ENCODE measurements at regions of chr3 and their contacts with region 1.

Region 1: DNA sequence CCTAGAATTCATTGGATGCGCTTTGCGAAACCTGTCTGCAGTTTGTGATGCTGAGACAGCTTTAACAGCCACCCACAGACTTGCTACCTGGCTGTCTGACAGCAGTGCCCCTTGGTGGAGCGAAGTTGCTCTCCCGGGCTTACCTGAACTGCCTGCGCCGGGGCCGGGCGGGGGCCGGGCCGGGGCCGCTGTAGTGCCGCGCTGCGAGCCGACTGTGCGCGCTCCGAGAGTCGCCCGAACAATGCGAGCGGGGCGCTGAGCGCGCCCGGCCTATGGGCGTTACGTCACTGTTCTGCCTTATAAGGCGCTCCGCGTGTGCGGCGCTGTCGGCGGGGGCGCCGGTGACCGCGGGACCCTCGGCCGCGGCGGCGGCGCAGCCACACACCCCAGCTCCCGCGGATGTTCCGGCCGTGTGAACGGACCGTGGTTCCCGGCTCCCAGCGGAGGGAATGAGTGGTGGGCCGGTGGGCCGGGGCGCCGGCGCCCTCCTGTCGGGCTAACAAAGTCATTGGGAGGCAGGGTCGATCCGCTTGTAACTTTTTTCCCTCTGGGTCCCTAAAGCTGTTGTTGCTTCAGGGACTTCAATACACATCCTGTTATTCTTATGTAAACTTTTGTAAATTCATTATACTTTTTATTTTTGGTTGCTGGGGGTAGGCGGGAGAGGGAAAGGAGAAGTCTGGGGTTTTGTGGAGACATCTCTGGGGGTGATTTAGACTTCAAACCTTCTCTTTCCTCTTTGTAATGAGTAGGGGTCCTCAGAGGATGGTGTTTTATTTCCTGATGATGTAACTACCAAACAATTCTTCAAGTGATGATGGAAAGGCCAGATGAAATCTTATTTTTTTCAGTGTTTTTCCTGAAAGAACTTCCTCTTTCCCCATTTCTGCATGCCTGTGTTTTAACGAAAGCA is 58.5 kb downstream of the CMSS1 start:
- DNase-seq: peak; percentile 84 to 86
- ATAC-seq: peak; percentile 94 to 97 (median 94)
- H3K4me3 ChIP-seq: peak overlapping the region; percentile 55 to 88 (median 75)
- H3K27ac ChIP-seq: peak overlapping the region; percentile 70 to 98 (median 94)
- H3K4me1 ChIP-seq: peaks cover 2 to 65% (median 44%) of the 10 kb centered on the region in 9 donors
- H3K27me3 ChIP-seq: no peaks in the 10 kb centered on the region
- CTCF ChIP-seq: peak in 3 of 9 donors; percentile 23 to 40 (median 40)

Region 2: DNA sequence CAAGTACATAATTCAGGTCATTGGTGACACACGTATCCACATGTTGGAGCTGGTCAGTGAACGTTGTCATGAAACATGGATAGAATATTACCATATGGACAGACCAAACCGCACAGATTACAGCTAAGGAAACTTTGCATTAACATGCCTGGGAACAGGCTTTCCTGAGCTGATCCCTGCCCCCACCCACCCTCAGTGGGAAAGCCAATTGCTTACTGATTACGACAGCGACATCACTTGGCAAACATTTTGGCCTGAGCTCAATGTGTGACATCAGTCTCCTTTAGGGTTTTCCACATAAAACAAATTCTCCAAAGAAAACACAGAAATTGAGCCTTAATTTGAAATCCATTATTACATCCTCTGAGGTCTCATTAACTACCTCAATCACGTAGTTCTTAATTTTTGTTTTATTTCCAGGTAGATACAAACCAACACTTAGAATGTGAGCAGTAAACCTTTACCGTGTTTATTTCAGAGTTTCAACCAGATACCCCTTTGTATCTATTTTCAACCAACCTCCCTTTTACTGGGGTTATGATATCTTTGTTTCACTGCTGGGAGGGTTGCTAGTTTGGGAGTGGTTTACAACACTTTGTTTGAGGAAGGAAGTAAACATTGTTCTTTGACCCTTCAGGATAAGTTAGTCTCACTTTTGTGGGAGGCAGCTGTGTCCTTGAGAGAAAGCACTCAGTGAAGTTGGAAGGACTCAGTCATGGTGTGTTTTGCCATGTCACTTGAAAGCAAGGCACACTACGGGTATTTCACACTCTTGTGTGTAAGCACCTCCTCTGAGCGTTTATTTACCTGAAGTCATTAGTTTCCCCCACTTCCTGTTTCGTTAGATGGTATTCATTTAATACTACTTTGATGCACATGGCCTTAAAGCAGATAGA is 44.5 kb after region 1 on chr3:
- intact Hi-C with region 1: loop called in 5 of 10 experiments (anchors 2 to 10 kb)
- DNase-seq: peak; percentile 60 to 90
- ATAC-seq: peak; percentile 61 to 89 (median 80)
- H3K4me3 ChIP-seq: no peak overlapping the region
- H3K27ac ChIP-seq: peak overlapping the region; percentile 44 to 90 (median 78)
- H3K4me1 ChIP-seq: peaks cover 3 to 50% (median 36%) of the 10 kb centered on the region in 9 donors
- H3K27me3 ChIP-seq: no peaks in the 10 kb centered on the region
- CTCF ChIP-seq: no peak

Region 3: DNA sequence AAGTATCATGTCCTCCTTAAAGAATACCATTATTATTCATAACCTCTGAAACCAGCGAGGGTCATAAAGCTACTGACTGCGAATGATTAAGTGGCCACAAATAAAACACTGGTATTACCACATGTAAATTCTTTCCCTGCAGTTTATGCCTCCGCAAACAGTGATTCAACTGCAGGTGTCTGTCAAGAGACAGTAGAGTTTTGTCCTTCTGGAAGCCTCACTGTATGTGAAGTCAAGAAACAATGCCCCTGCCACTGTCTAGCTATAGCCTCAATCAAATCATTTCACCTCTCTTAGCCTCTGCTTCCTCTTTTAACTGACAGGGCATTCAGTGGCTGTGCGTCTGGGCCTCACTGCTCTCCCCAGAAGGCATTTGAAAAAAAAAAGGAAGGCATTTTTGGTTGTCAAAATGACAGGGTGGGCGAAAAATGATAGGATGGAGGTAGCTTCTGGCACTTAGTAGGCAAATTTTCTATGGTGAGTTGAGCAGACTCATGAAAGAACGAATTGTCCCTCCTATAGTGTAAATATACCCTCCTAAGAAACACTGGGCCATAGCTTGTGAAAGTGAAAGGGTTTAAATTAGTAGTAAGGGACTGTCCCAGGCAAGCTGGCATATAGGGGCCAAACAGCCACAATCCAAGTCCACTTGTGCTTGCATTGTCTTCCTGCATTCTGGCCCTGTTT is 171.4 kb after region 1 on chr3:
- intact Hi-C with region 1: loop called in 6 of 10 experiments (anchors 5 to 10 kb)
- DNase-seq: peak in 1 of 2 donors; percentile 16
- ATAC-seq: peak in 6 of 8 donors; percentile 15 to 47 (median 37)
- H3K4me3 ChIP-seq: peak overlapping the region in 1 of 10 donors; percentile 2
- H3K27ac ChIP-seq: peak overlapping the region in 8 of 10 donors; percentile 42 to 91 (median 79)
- H3K4me1 ChIP-seq: peaks cover 3 to 62% (median 36%) of the 10 kb centered on the region in 9 donors
- H3K27me3 ChIP-seq: no peaks in the 10 kb centered on the region
- CTCF ChIP-seq: no peak

Region 4: GRCh38 chr3:100159331-100160153 is 283.4 kb after region 1 on chr3:
- intact Hi-C with region 1: loop called in 1 of 10 experiments (anchors 10 kb)
- DNase-seq: no peak
- ATAC-seq: peak in 5 of 8 donors; percentile 31 to 36 (median 35)
- H3K4me3 ChIP-seq: no peak overlapping the region
- H3K27ac ChIP-seq: peak overlapping the region; percentile 3 to 83 (median 65)
- H3K4me1 ChIP-seq: peaks cover 5 to 69% (median 46%) of the 10 kb centered on the region in 9 donors
- H3K27me3 ChIP-seq: no peaks in the 10 kb centered on the region
- CTCF ChIP-seq: no peak

Measured in heart right ventricle (tissue), 16 donors.